Activated CD4-positive, alpha-beta T cell treated with anti-CD3 and anti-CD28 coated beads for 36 hours (primary cell): ENCODE measurements at regions of chr2 and their contacts with region 1.

Region 1: DNA sequence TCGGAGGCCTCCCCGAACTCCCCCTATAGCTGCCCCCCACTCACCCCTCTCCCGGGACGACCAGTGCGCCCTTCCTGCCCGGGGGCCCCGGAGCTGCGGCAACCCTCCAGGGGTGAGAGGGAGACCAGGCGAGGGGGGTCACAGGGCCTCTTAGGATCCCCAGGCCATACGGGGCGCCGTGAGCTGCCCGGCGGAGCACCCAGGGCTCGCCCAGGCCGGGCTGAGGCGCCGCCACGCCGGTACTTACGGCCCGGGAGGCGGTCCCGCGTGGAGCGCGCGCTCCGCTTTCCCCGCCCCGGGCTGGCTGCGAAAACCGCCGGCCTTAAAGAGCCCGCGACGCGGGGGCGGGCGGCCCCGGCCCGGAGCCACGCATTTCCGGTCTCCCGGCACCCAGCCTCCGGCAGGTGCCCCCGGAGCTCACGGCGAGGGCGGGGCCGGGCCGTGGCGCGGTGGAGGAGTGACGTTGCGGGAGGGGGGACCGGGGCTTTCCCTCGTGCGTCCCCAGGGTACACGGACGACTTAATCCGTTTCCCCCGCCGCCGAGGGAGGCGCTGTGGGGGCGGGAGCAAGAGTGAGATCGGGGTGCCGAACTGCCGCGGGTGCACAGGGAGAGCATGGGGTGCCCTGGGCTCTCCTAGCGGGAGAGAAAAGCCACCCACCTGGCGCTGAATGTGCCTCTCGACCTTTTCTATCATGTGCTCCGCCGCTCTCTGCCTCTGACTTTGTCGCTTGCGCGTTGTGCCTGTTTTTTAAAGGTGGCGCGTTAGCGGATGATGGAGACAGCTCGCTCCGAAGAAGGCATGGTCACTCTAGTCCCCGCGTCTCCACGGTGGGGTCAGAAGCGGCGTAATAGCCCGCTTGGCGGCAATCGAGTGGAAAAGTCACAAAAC is at the start of gene METTL21A:
- DNase-seq: peak; percentile 97
- ATAC-seq: peak; percentile 78
- H3K4me3 Mint-ChIP-seq: peak within 1 kb of the TSS; percentile 90
- H3K27ac Mint-ChIP-seq: peak within 1 kb of the TSS; percentile 98
- H3K4me1 Mint-ChIP-seq: peaks cover 44% of the 10 kb centered on the region
- H3K27me3 Mint-ChIP-seq: no peaks in the 10 kb centered on the region
- total RNA-seq, gene METTL21A: 25.6 to 29.5 TPM

Region 2: DNA sequence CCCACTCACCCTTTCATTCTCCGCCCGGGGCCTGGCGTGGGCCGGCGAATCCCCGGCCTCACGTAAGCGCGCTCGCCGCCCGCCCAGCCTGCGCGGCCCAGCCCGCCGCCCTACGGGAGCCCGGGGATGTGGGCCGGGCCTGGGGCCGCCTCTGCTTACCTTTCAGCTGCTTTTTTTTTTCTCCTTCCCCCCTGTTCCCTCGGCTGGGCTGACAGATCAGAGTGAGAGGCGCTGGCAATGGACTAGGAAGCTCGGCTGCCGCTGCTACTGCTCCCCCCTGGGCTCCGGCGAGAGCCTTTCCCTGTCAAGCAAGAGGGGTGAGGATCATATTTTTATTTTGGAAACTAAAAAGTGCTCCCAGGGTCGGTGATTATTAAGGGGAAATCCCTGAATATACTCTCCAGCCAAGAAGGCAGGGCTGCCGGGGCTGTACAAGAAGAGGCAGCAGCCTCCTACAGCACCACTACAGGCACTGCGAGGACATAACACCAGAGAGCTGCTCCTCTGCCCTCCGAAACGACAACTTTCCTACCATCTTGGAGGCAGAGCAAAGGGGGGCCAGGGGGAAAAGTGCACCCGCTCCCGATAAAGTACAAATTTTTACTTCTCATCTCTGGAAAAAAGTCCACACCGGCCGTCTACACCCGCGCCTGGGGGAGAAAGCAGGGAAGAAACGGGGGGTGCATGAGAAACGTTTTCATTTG is 1539.4 kb before region 1 on chr2 and contains the start of gene INO80D:
- CTCF ChIA-PET with region 1: no interaction called
- POLR2A ChIA-PET with region 1: no interaction called
- intact Hi-C with region 1: loop called in 1 of 2 experiments (anchors 10 kb)
- DNase-seq: peak; percentile 89
- ATAC-seq: peak; percentile 96
- H3K4me3 Mint-ChIP-seq: peak within 1 kb of the TSS; percentile 96
- H3K27ac Mint-ChIP-seq: peak within 1 kb of the TSS; percentile 99
- H3K4me1 Mint-ChIP-seq: peaks cover 28% of the 10 kb centered on the region
- H3K27me3 Mint-ChIP-seq: no peaks in the 10 kb centered on the region
- total RNA-seq, gene INO80D: 17.6 to 18.9 TPM

Region 3: GRCh38 chr2:206765242-206766056 is 859.8 kb before region 1 on chr2 and contains the starts of genes FASTKD2 and MDH1B:
- CTCF ChIA-PET with region 1: interaction called, 3 read pairs
- POLR2A ChIA-PET with region 1: no interaction called
- intact Hi-C with region 1: loop called (anchors 1 kb)
- DNase-seq: peak; percentile 93
- ATAC-seq: peak; percentile 87
- H3K4me3 Mint-ChIP-seq: peak within 1 kb of the TSS; percentile 93
- H3K27ac Mint-ChIP-seq: peak within 1 kb of the TSS; percentile 98
- H3K4me1 Mint-ChIP-seq: peaks cover 37% of the 10 kb centered on the region
- H3K27me3 Mint-ChIP-seq: no peaks in the 10 kb centered on the region
- total RNA-seq, gene FASTKD2: 33.9 to 37.0 TPM
- total RNA-seq, gene MDH1B: 0.83 to 1.3 TPM

Region 4: GRCh38 chr2:207692206-207693065 is 67.2 kb after region 1 on chr2:
- CTCF ChIA-PET with region 1: interaction called, 3 read pairs
- POLR2A ChIA-PET with region 1: no interaction called
- intact Hi-C with region 1: loop called in 1 of 2 experiments (anchors 2 kb)
- DNase-seq: peak; percentile 66
- ATAC-seq: peak; percentile 75
- H3K4me3 Mint-ChIP-seq: no peak overlapping the region
- H3K27ac Mint-ChIP-seq: no peak overlapping the region
- H3K4me1 Mint-ChIP-seq: peaks cover 9% of the 10 kb centered on the region
- H3K27me3 Mint-ChIP-seq: no peaks in the 10 kb centered on the region

Region 5: DNA sequence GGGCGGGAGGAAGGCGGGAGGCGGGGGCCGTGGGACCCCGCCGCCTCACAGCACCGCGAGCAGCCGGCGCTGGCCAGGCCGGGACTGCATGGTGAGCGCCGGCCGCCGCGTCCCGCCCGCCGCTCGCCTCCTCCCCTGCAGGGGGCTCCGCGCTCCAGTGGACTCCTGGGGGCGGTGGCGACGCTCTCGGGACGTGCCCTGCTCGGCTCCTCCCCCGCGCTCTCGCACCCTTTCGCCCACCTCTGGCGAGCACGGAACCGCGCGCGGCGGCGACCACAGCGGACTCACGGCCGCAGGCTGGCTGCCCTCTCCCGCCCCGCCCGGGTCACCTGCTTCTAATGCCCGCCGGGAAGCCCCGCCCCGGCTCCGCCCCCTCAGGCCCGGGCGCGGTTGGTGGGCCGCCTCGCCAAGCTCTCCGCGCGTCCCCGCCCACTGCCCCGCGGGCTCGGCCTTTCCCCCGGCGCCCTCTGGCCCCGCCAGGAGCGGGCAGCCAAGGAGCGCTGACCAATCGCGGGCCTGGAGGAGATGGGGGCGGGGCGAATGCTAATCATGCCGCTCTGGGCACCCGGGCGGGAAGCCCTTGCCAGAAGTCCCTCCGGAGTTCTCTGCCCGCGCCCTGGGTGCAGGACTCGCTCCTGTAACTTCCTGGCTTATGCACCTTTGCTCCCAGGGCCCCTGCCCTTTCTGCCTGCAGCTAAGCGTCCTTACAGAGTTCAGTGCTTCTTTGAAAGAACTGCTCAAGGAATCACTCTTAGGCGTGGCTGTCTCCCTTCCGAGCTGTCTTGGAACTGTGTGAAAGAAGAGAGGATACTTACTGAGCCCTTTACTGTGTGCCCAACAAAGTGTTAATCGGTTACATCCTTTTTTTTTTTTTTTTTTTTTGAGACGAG is 144.6 kb after region 1 on chr2 and contains the start of gene FZD5:
- CTCF ChIA-PET with region 1: no interaction called
- POLR2A ChIA-PET with region 1: interaction called, 3 read pairs
- intact Hi-C with region 1: loop called in 1 of 2 experiments (anchors 1 kb)
- DNase-seq: peak; percentile 90
- ATAC-seq: peak; percentile 83
- H3K4me3 Mint-ChIP-seq: peak within 1 kb of the TSS; percentile 79
- H3K27ac Mint-ChIP-seq: no peak within 1 kb of the TSS
- H3K4me1 Mint-ChIP-seq: peaks cover 27% of the 10 kb centered on the region
- H3K27me3 Mint-ChIP-seq: peaks cover 41% of the 10 kb centered on the region
- total RNA-seq, gene FZD5: 1.1 to 1.3 TPM

Region 6: GRCh38 chr2:207883002-207883780 is 257.9 kb after region 1 on chr2:
- CTCF ChIA-PET with region 1: no interaction called
- POLR2A ChIA-PET with region 1: no interaction called
- intact Hi-C with region 1: no loop called
- DNase-seq: no peak
- ATAC-seq: peak; percentile 53
- H3K4me3 Mint-ChIP-seq: no peak overlapping the region
- H3K27ac Mint-ChIP-seq: no peak overlapping the region
- H3K4me1 Mint-ChIP-seq: peaks cover 3% of the 10 kb centered on the region
- H3K27me3 Mint-ChIP-seq: no peaks in the 10 kb centered on the region

Region 7: GRCh38 chr2:208025037-208025813 is 400.0 kb after region 1 on chr2 and contains the start of gene PLEKHM3:
- CTCF ChIA-PET with region 1: interaction called, 3 read pairs
- POLR2A ChIA-PET with region 1: interaction called, 7 read pairs
- intact Hi-C with region 1: loop called (anchors 1 to 10 kb)
- DNase-seq: peak; percentile 88
- ATAC-seq: peak; percentile 83
- H3K4me3 Mint-ChIP-seq: peak within 1 kb of the TSS; percentile 77
- H3K27ac Mint-ChIP-seq: peak within 1 kb of the TSS; percentile 94
- H3K4me1 Mint-ChIP-seq: peaks cover 12% of the 10 kb centered on the region
- H3K27me3 Mint-ChIP-seq: no peaks in the 10 kb centered on the region
- total RNA-seq, gene PLEKHM3: 4.5 to 5.2 TPM

Region 8: DNA sequence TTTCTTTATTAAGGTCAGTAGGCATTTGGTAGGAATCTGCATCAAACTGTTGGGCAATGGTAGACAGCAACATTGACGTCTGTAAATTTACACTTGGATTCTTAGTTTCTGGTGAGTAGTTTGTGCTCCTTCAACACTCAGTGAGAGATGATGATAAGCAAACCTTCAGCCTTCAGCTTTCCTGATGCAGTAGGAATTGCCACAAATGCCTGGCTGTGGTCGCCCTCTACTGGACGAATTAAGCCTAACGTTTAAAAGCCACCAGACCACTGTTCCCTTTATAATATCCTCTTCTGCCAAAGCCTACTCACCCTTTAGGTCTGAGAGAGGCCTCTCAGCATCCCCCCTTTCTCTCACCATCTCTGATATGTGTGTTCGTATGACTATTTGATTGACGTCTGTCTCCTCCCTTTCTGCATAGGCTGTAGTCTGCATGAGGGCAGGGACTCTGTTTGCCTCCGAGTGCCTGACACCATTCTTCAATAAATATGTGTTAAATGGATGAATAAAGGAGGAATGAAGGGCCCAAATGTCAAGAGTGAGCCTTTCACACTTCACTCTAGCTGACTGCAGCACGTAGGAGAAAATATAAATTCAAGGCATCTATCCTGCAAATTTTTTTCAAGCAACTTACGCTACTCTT is 447.1 kb after region 1 on chr2:
- CTCF ChIA-PET with region 1: interaction called, 3 read pairs
- POLR2A ChIA-PET with region 1: no interaction called
- intact Hi-C with region 1: loop called in 1 of 2 experiments (anchors 10 kb)
- DNase-seq: peak; percentile 71
- ATAC-seq: peak; percentile 82
- H3K4me3 Mint-ChIP-seq: no peak overlapping the region
- H3K27ac Mint-ChIP-seq: no peak overlapping the region
- H3K4me1 Mint-ChIP-seq: no peaks in the 10 kb centered on the region
- H3K27me3 Mint-ChIP-seq: peaks cover 2% of the 10 kb centered on the region